HEK293 (cell line): ENCODE measurements at regions of chr12 and their contacts with region 1.

Region 1: DNA sequence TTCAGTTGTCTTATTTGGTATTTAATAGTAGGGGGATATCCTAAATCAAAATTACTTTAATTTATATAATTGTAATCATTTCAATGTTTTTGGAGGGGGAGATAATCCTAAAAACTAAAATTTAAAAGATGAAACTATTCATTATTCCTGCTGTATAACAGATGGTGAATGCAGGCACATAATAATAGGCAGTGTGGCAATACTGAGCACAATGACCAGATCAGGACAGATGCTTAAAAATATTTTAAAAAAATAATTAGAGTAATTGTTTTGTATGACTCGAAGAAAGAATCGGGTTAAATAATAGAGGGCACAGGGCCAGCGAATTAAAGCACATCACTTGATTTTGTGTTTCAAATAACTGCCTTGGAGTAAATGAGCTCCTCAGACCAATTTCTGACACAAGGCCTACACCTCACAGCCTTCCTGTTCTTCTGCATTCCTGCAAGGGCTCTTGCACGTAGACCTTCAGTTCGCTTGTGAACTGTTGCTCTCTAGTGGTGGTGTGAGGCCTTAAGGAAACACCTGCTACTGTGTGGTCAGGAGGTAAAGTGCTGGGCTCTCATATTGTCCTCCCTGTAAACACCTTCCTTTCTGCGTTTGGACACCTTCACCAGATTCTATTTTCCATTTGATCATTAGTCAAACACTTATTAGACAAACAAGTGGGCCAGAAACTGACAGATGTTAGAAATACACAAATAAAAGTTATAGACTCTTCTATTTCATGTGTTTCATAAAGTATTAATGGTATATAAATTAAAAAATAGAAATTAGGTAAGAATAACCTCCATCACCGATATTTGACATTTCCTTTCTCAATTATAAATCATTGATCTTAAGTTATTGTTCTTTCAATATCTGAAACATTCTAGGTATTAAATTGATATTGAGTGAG is 29.3 kb upstream of the KLRF1 start:
- H3K4me3 ChIP-seq: no peak overlapping the region
- H3K27ac ChIP-seq: no peak overlapping the region
- H3K4me1 ChIP-seq: no peaks in the 10 kb centered on the region
- CTCF ChIP-seq: peak; percentile 75

Region 2: DNA sequence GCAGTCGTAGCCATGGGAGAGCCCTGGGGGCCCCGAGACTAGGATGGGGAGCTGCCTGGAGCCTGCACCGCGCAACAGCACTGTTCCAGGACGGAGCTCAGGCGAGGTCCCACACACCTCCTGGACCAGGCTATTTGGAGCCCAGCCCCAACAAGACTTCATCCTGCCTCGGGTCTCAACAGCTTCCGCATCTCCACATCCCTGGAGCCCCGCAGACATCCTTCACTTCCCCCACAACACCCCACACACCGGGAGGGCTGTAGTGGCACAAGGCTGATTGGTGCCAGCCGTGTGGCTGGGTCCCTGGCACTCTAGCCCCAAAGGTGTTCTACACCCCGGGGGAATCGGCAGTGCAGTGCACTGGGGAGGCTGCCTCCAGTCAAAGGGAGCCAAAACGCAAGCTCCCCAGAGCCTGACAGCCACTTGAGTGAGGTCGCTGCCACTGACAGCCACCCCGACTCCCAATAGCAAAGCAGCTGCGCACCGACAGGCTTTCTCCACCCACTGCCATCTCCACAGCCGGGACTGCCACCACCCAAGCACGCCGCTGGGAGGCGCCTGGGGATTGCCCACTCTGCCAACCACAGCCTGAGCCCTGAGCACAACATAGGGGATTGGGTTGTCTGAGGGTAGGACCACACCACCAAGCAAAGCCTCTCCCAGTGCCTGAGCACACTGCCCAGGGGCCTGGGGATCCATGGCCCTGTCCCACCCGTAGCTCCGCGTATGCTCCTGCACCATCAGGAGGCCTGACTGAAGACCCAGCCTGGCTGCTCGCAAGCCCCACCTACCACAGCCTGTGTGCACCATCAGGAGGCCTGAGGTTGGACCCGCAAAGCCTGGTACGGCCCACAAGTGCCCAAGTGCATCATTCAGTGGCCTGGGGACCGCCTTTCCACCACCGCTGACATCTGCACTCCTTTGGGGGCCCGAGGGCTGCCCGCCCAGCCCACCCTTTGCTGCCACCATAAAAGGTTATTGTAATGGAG is 16.1 kb after region 1 on chr12:
- CTCF ChIA-PET with region 1: interaction called, 40 read pairs
- POLR2A ChIA-PET with region 1: no interaction called
- H3K4me3 ChIP-seq: peak overlapping the region; percentile 28
- H3K27ac ChIP-seq: no peak overlapping the region
- H3K4me1 ChIP-seq: no peaks in the 10 kb centered on the region
- CTCF ChIP-seq: peak; percentile 91